A673 (cell line): ENCODE measurements at regions of chr12 and their contacts with region 1.

Region 1: DNA sequence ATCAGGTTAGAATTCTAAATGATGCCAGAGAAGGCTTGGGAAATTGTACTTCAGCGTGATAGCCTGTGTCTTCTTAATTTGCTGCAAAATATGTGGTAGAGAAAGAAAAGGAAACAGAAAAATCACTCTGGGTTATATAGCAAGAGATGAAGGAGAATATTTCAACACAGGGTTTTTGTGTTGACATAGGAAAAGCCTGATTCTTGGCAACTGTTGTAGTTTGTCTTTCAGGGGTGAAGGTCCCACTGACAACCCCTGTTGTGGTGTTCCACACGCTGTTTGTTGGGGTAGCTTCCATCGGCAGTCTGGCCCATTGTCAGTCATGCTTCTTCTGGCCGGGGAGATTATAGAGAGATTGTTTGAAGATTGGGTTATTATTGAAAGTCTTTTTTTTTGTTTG is 13.8 kb upstream of the SLCO1C1 start:
- DNase-seq: no peak
- H3K4me3 ChIP-seq: no peak overlapping the region
- H3K27ac ChIP-seq: no peak overlapping the region
- H3K4me1 ChIP-seq: no peaks in the 10 kb centered on the region
- H3K27me3 ChIP-seq: no peaks in the 10 kb centered on the region
- CTCF ChIP-seq: no peak

Region 2: DNA sequence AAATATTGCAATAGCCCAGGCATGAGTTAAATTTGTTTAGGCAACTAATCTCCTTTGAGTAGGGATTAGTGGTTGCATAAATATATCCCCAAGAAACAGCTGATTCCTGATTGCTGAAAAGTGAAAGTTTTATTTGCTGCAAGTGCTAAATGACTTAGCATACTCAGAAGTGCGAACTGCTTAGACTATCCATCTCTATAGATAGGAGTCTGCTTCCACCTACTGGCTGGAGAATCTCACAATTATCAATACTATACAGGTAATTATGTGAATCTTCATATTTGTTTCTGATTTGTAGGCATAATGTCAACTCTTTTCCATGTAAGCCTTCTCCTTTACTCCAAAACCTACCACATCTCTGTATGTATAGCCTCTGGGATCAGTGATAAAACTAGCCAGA is 117.2 kb after region 1 on chr12:
- CTCF ChIA-PET with region 1: interaction called, 3 read pairs
- POLR2A ChIA-PET with region 1: no interaction called
- intact Hi-C with region 1: loop called (anchors 2 kb)
- DNase-seq: peak; percentile 57
- H3K4me3 ChIP-seq: no peak overlapping the region
- H3K27ac ChIP-seq: no peak overlapping the region
- H3K4me1 ChIP-seq: no peaks in the 10 kb centered on the region
- H3K27me3 ChIP-seq: no peaks in the 10 kb centered on the region
- CTCF ChIP-seq: peak; percentile 59